Ascending aorta (tissue), 2 donors: ENCODE measurements at regions of chr22 and their contacts with region 1.

Region 1: GRCh38 chr22:37817705-37818408 is 5.3 kb upstream of the GALR3 start:
- DNase-seq: peak; percentile 33 to 89
- H3K4me3 ChIP-seq: peak overlapping the region; percentile 56 to 62
- H3K27ac ChIP-seq: no peak overlapping the region
- H3K4me1 ChIP-seq: peaks cover 8 to 15% of the 10 kb centered on the region in 2 donors
- H3K27me3 ChIP-seq: no peaks in the 10 kb centered on the region
- CTCF ChIP-seq: peak; percentile 95 to 96 (median 95)

Region 2: GRCh38 chr22:37862570-37863325 is 44.9 kb after region 1 on chr22:
- intact Hi-C with region 1: loop called (anchors 1 kb)
- DNase-seq: no peak
- H3K4me3 ChIP-seq: no peak overlapping the region
- H3K27ac ChIP-seq: no peak overlapping the region
- H3K4me1 ChIP-seq: peaks cover 0 to 6% of the 10 kb centered on the region in 2 donors
- H3K27me3 ChIP-seq: no peaks in the 10 kb centered on the region
- CTCF ChIP-seq: no peak

Region 3: GRCh38 chr22:37940698-37941376 is 123.0 kb after region 1 on chr22:
- intact Hi-C with region 1: no loop called
- DNase-seq: no peak
- H3K4me3 ChIP-seq: no peak overlapping the region
- H3K27ac ChIP-seq: no peak overlapping the region
- H3K4me1 ChIP-seq: no peaks in the 10 kb centered on the region
- H3K27me3 ChIP-seq: no peaks in the 10 kb centered on the region
- CTCF ChIP-seq: no peak

Region 4: DNA sequence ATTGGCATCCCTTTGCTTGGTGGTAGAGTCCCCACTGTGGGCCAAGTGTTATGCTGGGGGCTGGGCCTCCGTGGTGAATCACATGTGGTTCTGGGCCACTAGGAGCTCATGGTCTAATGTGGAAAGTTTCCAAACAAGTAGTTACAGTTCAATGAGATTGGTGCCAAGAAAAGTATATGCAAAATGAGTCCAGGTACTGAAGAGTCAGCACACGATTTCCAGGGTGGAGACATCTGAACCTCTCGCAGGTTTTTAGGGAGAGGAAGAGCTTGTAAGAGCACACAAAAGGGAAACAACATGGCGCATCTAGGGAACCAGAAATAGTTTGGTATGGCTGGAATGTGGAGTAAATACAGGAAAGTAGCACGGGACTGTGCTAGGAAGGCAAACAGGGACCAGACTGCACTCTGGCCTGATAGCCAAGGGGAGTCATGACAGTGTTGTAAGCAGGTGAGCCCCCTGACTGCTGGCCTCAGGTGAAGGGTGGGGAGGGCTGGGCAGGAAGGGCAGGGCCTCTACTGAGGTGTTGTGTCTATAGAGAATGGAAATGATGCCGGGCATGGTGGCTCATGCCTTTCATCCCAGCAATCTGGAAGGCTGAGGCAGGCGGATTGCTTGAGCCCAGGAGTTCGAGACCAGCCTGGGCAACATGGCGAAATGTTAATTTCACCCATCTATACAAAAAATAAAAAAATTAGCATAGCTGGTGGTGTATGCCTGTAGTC is 148.2 kb after region 1 on chr22:
- intact Hi-C with region 1: loop called (anchors 1 kb)
- DNase-seq: no peak
- H3K4me3 ChIP-seq: no peak overlapping the region
- H3K27ac ChIP-seq: no peak overlapping the region
- H3K4me1 ChIP-seq: no peaks in the 10 kb centered on the region
- H3K27me3 ChIP-seq: no peaks in the 10 kb centered on the region
- CTCF ChIP-seq: no peak